Activated B cell treated with CpG ODN at 0.5 μM for 24 hours (primary cell): ENCODE measurements at regions of chr4 and their contacts with region 1.

Region 1: GRCh38 chr4:56799824-56800756 is 21.4 kb downstream of the SPINK2 start:
- DNase-seq: peak; percentile 61
- ATAC-seq: peak; percentile 98
- H3K4me3 Mint-ChIP-seq: peak overlapping the region; percentile 95
- H3K27ac Mint-ChIP-seq: peak overlapping the region; percentile 92
- H3K4me1 Mint-ChIP-seq: peaks cover 32% of the 10 kb centered on the region
- H3K27me3 Mint-ChIP-seq: no peaks in the 10 kb centered on the region
- CTCF ChIP-seq: no peak

Region 2: DNA sequence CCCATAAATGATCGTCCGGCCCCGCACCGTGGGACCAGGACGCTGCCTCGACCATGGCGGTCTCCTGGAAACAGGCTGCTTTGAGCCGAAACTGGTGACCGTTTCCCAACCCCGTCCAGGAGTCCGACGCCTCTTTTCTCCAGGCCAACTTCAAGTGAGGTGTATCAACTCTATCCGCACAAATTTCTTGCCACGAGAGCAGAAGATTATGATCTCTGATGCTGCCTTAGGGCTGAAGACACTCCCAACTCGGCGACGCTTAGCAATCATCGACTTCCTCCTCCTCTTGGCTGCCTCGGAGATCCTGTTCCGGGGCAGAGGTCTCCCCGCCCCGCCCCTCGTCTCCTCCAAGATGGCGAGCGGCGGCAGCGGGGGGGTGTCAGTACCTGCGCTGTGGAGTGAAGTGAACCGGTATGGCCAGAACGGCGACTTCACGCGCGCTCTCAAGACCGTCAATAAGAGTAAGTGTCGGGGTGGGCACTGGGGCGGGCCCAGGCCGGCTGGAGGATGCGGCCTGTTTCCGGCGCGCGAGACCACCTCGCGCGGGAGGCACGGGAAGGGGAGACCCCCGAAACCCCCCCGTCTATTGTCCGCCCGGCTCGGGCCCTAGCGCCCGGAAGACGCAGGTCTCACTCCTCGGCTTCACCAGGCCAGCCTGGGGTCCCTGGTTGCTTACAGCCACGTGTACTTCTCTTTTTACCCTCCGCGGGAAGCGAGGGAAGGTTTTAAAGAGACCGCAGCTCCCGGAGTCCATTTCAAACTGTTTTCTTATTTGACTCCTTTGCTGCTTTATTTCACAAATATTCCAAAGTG is 332.6 kb before region 1 on chr4 and contains the start of gene SRP72:
- CTCF ChIA-PET with region 1: interaction called, 4 read pairs
- POLR2A ChIA-PET with region 1: interaction called, 3 read pairs
- intact Hi-C with region 1: loop called (anchors 1 kb)
- DNase-seq: peak; percentile 83
- ATAC-seq: peak; percentile 96
- H3K4me3 Mint-ChIP-seq: peak within 1 kb of the TSS; percentile 99
- H3K27ac Mint-ChIP-seq: peak within 1 kb of the TSS; percentile 96
- H3K4me1 Mint-ChIP-seq: peaks cover 57% of the 10 kb centered on the region
- H3K27me3 Mint-ChIP-seq: no peaks in the 10 kb centered on the region
- CTCF ChIP-seq: no peak
- total RNA-seq, gene SRP72: 139 TPM in 2 replicates

Region 3: DNA sequence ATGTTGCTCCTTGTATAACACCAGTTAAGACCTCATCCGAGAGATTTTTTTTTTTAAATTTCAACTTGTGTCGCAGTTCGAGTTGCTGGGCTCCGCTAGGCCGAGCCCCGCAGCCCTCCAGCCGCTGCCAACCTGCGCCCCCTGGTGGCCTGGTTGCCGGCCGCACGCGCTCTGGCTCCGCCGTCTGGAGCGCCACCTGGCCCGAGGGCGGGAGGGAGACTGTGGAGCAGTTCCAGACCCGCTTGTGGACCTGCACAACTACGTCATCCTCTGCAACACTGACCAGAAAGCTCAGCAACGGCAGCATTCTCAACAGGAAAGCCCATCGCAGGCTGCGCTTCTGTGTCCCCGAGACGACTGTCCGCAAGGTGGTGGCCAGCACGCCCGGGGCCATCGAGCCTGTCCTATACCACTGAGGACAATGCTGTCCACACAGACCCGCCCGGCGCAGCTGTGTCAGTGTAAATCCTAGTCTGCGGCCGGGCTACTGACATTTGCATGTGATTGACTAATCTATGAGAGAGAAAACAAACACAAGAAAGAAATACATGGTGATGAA is 255.4 kb before region 1 on chr4:
- CTCF ChIA-PET with region 1: no interaction called
- POLR2A ChIA-PET with region 1: no interaction called
- intact Hi-C with region 1: loop called (anchors 1 kb)
- DNase-seq: peak; percentile 89
- ATAC-seq: peak; percentile 99
- H3K4me3 Mint-ChIP-seq: peak overlapping the region; percentile 71
- H3K27ac Mint-ChIP-seq: no peak overlapping the region
- H3K4me1 Mint-ChIP-seq: peaks cover 10% of the 10 kb centered on the region
- H3K27me3 Mint-ChIP-seq: peaks cover 14% of the 10 kb centered on the region
- CTCF ChIP-seq: peak; percentile 93

Region 4: GRCh38 chr4:56655209-56655626 is 144.9 kb before region 1 on chr4:
- CTCF ChIA-PET with region 1: interaction called, 6 read pairs
- POLR2A ChIA-PET with region 1: no interaction called
- intact Hi-C with region 1: loop called (anchors 1 kb)
- DNase-seq: peak; percentile 23
- ATAC-seq: peak; percentile 25
- H3K4me3 Mint-ChIP-seq: peak overlapping the region; percentile 92
- H3K27ac Mint-ChIP-seq: peak overlapping the region; percentile 46
- H3K4me1 Mint-ChIP-seq: peaks cover 65% of the 10 kb centered on the region
- H3K27me3 Mint-ChIP-seq: peaks cover 2% of the 10 kb centered on the region
- CTCF ChIP-seq: no peak

Region 5: DNA sequence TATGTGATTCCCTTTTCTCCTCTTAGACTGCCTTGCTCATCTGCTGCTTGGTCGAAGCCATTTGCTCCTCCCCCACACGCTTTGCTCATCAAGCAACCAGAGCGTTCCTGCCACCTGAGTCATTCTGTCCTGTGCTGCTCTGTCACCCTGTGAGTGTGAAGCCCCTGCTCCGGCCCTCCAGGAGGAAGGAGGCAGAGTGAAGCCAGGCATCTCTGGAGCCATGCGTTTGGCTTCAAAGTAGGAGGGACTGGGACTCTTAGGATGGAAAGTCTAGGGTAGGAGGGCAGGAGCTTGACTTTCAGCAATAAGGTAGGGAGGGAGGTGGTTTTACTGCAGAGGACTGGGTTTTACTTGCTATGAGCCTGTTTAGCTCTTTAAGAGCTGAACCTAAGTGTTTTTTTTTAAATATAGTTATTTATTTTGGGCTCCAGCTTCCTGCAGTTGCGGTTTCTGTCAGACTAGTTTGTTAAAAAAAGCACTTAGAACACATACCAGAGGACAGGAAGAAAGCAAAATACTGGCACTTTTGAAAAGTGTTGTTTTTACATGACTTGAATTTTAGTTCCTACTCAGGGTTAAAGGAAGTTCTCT is 42.2 kb before region 1 on chr4:
- CTCF ChIA-PET with region 1: interaction called, 10 read pairs
- POLR2A ChIA-PET with region 1: interaction called, 5 read pairs
- intact Hi-C with region 1: loop called (anchors 1 kb)
- DNase-seq: peak; percentile 55
- ATAC-seq: peak; percentile 96
- H3K4me3 Mint-ChIP-seq: peak overlapping the region; percentile 81
- H3K27ac Mint-ChIP-seq: peak overlapping the region; percentile 96
- H3K4me1 Mint-ChIP-seq: peaks cover 63% of the 10 kb centered on the region
- H3K27me3 Mint-ChIP-seq: no peaks in the 10 kb centered on the region
- CTCF ChIP-seq: no peak

Region 6: DNA sequence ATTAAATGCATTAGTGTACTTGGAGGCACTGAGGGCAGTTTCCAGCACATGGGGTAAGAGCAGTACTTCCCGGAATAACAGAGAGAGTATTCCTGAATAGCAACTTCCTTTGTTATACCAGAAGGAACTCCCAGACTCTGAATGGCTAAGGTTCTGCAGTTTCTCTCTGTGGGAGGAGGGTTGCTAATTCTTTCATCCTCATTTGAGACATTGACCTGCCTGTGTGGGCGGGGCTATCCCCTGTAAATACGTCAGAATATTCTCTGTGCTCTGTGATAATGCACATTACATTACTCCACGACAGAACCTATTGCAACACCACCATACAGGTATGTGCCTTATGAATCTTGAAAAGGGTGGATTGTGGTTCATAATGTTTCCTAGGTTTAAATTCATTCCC is 31.3 kb before region 1 on chr4:
- CTCF ChIA-PET with region 1: no interaction called
- POLR2A ChIA-PET with region 1: no interaction called
- intact Hi-C with region 1: no loop called
- DNase-seq: no peak
- ATAC-seq: no peak
- H3K4me3 Mint-ChIP-seq: no peak overlapping the region
- H3K27ac Mint-ChIP-seq: no peak overlapping the region
- H3K4me1 Mint-ChIP-seq: peaks cover 22% of the 10 kb centered on the region
- H3K27me3 Mint-ChIP-seq: no peaks in the 10 kb centered on the region
- CTCF ChIP-seq: no peak

Region 7: DNA sequence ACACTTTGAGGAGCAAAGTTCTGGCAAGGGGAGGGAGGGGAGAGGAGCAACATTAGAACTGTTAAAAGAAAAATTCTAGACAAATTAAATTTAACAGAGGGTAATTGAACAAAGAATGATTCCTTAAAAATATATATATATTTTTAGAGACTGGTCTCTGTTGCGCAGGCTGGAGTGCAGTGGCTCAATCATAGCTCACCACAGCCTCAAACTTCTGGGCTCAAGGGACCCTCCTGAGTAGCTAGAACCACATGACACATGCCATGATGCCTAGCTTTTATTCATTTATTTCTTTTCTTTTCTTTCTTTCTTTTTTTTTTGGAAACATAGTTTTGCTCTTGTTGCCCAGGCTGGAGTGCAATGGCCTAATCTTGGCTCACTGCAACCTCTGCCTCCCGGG is 40.5 kb after region 1 on chr4:
- CTCF ChIA-PET with region 1: interaction called, 10 read pairs
- POLR2A ChIA-PET with region 1: interaction called, 3 read pairs
- intact Hi-C with region 1: loop called (anchors 1 kb)
- DNase-seq: no peak
- ATAC-seq: no peak
- H3K4me3 Mint-ChIP-seq: no peak overlapping the region
- H3K27ac Mint-ChIP-seq: no peak overlapping the region
- H3K4me1 Mint-ChIP-seq: peaks cover 4% of the 10 kb centered on the region
- H3K27me3 Mint-ChIP-seq: no peaks in the 10 kb centered on the region
- CTCF ChIP-seq: no peak